ENCODE measurements at regions of chr7 and their contacts with region 1.

Region 1: GRCh38 chr7:100132697-100133151 is 6.0 kb downstream of the MBLAC1 start:
- DNase-seq: peak; percentile 60 to 71 (median 65)
- H3K4me3 ChIP-seq: no peak overlapping the region
- H3K4me3 Mint-ChIP-seq: peak overlapping the region in 2 of 8 donors; percentile 39 to 52
- H3K27ac ChIP-seq: no peak overlapping the region
- H3K27ac Mint-ChIP-seq: peak overlapping the region in 5 of 7 donors; percentile 36 to 77 (median 48)
- H3K4me1 ChIP-seq: peaks cover 24% of the 10 kb centered on the region
- H3K4me1 Mint-ChIP-seq: peaks cover 5 to 20% (median 13%) of the 10 kb centered on the region in 4 donors
- H3K27me3 ChIP-seq: no peaks in the 10 kb centered on the region
- H3K27me3 Mint-ChIP-seq: peaks cover 0 to 1% of the 10 kb centered on the region in 2 donors

Region 2: GRCh38 chr7:99975782-99976521 is 156.8 kb before region 1 on chr7 and contains the start of gene AZGP1:
- CTCF ChIA-PET with region 1: interaction called, 51 read pairs
- POLR2A ChIA-PET with region 1: no interaction called
- intact Hi-C with region 1: no loop called
- DNase-seq: no peak
- H3K4me3 ChIP-seq: no peak within 1 kb of the TSS
- H3K4me3 Mint-ChIP-seq: no peak within 1 kb of the TSS
- H3K27ac ChIP-seq: no peak within 1 kb of the TSS
- H3K27ac Mint-ChIP-seq: no peak within 1 kb of the TSS
- H3K4me1 ChIP-seq: no peaks in the 10 kb centered on the region
- H3K4me1 Mint-ChIP-seq: peaks cover 0 to 2% (median 0%) of the 10 kb centered on the region in 4 donors
- H3K27me3 ChIP-seq: no peaks in the 10 kb centered on the region
- H3K27me3 Mint-ChIP-seq: peaks cover 9 to 16% of the 10 kb centered on the region in 2 donors
- total RNA-seq, gene AZGP1: not detected

Region 3: DNA sequence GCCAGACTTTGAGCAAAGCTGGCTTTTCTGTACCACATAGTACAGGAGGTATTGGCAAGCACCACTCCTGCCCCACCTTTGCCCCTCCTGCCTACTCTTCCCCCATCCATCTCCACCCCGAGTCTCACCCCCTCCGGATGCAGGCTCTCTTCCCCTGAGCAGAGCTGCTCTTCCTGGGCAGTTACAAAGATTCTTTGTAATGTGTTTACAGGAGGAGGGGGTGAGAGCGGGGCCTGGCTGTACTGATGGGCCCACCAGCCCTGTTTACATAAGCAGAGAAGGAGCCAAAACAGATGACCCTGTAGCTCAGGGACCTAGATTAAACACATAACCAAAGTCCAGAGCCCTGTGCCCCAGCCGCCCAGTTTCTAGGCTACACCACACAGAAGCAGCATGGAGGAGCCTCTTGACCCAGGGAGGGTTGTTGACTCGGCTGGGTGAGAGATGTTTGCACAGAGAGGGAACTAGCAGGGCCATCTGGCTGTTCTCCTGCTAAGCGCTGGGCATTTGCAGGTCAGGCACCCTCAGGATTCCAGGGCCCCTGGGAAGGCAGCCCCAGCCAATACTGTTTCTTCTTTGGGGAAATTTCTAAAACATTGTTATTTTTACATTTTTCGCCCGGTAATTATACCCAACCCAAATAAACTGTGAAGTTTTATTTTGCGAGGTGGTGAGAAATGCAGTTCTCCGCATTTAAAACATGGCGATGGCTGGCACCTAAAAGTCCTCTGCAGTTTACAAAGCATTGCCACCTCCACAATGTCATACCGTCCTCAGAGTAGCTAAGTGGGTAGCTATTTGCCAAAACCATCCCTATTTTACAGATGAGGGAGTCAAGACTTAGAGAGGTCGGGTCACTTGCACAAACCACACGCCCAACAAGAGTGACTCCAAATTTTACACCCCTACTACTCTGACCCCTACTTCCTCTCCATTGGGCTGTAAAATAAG is 128.7 kb before region 1 on chr7:
- CTCF ChIA-PET with region 1: no interaction called
- POLR2A ChIA-PET with region 1: no interaction called
- intact Hi-C with region 1: no loop called
- DNase-seq: no peak
- H3K4me3 ChIP-seq: no peak overlapping the region
- H3K4me3 Mint-ChIP-seq: no peak overlapping the region
- H3K27ac ChIP-seq: no peak overlapping the region
- H3K27ac Mint-ChIP-seq: peak overlapping the region in 2 of 7 donors; percentile 29 to 31
- H3K4me1 ChIP-seq: no peaks in the 10 kb centered on the region
- H3K4me1 Mint-ChIP-seq: no peaks in the 10 kb centered on the region
- H3K27me3 ChIP-seq: no peaks in the 10 kb centered on the region
- H3K27me3 Mint-ChIP-seq: peaks cover 0 to 2% of the 10 kb centered on the region in 2 donors

Region 4: GRCh38 chr7:100119062-100119700 is 13.5 kb before region 1 on chr7 and contains the starts of genes CNPY4 and TAF6:
- CTCF ChIA-PET with region 1: interaction called, 21 read pairs
- POLR2A ChIA-PET with region 1: interaction called, 34 read pairs
- intact Hi-C with region 1: loop called (anchors 1 kb)
- DNase-seq: peak; percentile 96
- H3K4me3 ChIP-seq: peak within 1 kb of the TSS; percentile 89 to 95
- H3K4me3 Mint-ChIP-seq: peak within 1 kb of the TSS; percentile 94 to 99 (median 96)
- H3K27ac ChIP-seq: peak within 1 kb of the TSS; percentile 80
- H3K27ac Mint-ChIP-seq: peak within 1 kb of the TSS; percentile 95 to 100 (median 99)
- H3K4me1 ChIP-seq: peaks cover 26% of the 10 kb centered on the region
- H3K4me1 Mint-ChIP-seq: peaks cover 7 to 40% (median 26%) of the 10 kb centered on the region in 4 donors
- H3K27me3 ChIP-seq: no peaks in the 10 kb centered on the region
- H3K27me3 Mint-ChIP-seq: no peaks in the 10 kb centered on the region
- total RNA-seq, gene CNPY4: 69.0 to 69.8 TPM
- total RNA-seq, gene TAF6: 61.6 to 62.2 TPM

Region 5: DNA sequence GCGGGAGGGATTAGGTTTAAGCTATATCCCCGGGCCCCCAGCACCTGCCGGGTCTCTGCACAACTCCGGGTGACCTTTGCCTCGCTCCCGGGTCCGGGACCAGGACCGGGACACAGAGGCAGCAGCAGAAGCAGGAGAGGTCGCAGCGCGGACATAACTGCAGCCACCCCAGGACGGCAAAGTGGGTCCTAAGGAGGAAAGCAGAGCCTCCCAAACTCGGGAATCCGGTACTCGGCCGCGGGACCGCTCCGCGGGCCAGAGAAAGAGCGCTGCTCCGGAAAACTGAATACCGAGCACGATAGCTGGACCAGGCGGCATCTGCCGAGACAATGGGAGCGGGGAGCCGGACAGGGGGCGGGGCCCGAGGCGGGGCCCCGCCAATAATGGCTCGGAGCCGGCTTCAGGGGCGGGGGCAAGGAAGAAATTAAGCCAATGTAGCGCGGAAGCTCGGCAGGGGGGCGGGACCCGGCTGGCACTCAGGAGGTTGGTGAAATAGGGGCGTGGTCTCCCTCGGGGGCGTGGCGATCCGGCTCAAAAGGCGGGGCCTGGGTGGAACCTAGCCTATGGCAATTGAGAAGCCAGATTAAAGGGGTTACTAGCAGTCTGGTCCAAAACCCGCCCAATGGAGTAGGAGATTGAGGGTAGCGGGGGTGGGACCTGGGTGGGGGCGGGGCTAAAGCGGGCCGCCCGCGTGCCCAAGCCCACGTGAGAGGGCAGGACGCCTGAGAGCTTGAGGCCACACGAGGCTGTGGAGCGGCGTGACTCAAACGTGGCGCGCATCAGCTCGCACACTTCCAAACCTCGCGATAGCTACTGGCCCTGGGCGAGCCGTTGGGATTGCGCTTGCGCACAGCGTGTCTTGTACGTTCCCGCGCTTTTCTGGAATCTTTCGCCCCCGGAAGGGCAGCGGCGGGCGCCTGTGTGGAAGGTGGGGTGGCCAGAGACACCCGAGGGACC is 44.6 kb after region 1 on chr7 and contains the starts of genes GPC2 and STAG3:
- CTCF ChIA-PET with region 1: interaction called, 11 read pairs
- POLR2A ChIA-PET with region 1: interaction called, 4 read pairs
- intact Hi-C with region 1: no loop called
- DNase-seq: peak; percentile 96 to 97 (median 97)
- H3K4me3 ChIP-seq: peak within 1 kb of the TSS; percentile 36 to 41
- H3K4me3 Mint-ChIP-seq: peak within 1 kb of the TSS; percentile 66 to 83 (median 80)
- H3K27ac ChIP-seq: peak within 1 kb of the TSS; percentile 35
- H3K27ac Mint-ChIP-seq: peak within 1 kb of the TSS; percentile 62 to 91 (median 76)
- H3K4me1 ChIP-seq: peaks cover 30% of the 10 kb centered on the region
- H3K4me1 Mint-ChIP-seq: peaks cover 22 to 50% (median 34%) of the 10 kb centered on the region in 4 donors
- H3K27me3 ChIP-seq: no peaks in the 10 kb centered on the region
- H3K27me3 Mint-ChIP-seq: no peaks in the 10 kb centered on the region
- total RNA-seq, gene GPC2: 11.8 to 12.5 TPM
- total RNA-seq, gene STAG3: 6.5 to 7.7 TPM

Region 6: DNA sequence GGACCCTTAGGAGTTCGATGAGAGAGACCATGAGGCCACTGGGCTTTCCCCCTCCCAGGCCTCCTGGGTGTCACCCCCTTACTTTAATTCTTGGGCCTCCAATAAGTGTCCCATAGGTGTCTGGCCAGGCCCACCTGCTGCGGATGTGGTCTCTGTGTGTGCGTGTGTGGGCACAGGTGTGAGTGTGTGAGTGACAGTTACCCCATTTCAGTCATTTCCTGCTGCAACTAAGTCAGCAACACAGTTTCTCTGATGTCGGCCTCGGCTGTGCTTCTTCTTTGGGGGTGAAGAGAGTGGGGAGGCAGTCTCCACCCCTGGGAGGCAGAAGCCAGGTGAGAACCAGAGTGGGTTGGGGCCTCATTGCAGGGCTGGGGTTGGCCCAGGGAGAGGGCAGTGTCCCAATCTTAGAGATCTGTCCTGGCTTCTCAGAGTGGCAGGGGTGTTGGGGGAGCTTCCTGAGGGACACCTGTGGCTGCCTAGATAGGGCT is 88.6 kb after region 1 on chr7:
- CTCF ChIA-PET with region 1: interaction called, 108 read pairs
- POLR2A ChIA-PET with region 1: interaction called, 18 read pairs
- intact Hi-C with region 1: loop called (anchors 1 kb)
- DNase-seq: peak; percentile 87 to 94 (median 88)
- H3K4me3 ChIP-seq: peak overlapping the region; percentile 84 to 91
- H3K4me3 Mint-ChIP-seq: peak overlapping the region; percentile 92 to 98 (median 96)
- H3K27ac ChIP-seq: peak overlapping the region; percentile 90
- H3K27ac Mint-ChIP-seq: peak overlapping the region; percentile 96 to 99 (median 99)
- H3K4me1 ChIP-seq: peaks cover 69% of the 10 kb centered on the region
- H3K4me1 Mint-ChIP-seq: peaks cover 28 to 75% (median 57%) of the 10 kb centered on the region in 4 donors
- H3K27me3 ChIP-seq: no peaks in the 10 kb centered on the region
- H3K27me3 Mint-ChIP-seq: no peaks in the 10 kb centered on the region

Region 7: DNA sequence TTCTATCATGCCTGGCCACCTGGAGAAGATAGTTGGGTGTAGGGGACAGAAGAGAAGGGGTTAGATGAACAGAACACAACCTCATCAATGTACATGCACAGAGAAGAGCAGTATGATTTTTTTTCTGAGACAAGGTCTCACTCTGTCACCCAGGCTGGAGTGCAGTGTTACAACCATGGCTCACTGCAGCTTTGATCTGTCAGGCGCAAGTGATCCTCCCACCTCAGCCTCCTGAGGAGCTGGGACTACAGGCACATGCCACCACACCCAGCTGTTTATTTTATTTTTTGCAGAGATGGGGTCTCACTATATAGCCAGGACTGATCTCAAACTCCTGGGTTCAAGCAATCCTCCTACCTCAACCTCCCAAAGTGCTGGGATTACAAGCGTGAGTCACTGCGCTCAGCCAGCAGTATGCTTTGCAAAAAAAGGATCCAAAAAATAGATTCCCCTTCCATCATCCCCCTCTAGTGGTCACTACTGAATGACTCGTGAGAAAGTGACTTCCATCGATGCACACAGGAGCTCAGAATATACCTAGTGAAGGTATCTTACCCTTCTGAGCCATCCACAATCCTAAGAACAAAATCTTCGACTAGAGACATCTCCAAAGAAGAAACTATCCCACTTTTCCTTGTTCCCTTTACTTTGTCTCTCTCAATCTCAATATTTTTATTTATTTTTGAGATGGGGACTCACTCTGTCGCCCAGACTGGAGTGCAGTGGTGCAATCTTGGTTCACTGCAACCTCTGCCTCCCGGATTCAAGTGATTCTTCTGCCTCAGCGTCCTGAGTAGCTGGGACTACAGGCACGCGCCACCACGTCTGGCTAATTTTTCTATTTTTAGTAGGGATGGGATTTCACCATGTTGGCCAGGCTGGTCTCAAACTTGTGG is 274.8 kb after region 1 on chr7:
- CTCF ChIA-PET with region 1: interaction called, 7 read pairs
- POLR2A ChIA-PET with region 1: interaction called, 4 read pairs
- intact Hi-C with region 1: loop called (anchors 2 kb)
- DNase-seq: peak; percentile 57 to 63 (median 58)
- H3K4me3 ChIP-seq: no peak overlapping the region
- H3K4me3 Mint-ChIP-seq: no peak overlapping the region
- H3K27ac ChIP-seq: no peak overlapping the region
- H3K27ac Mint-ChIP-seq: no peak overlapping the region
- H3K4me1 ChIP-seq: peaks cover 4% of the 10 kb centered on the region
- H3K4me1 Mint-ChIP-seq: peaks cover 0 to 5% (median 2%) of the 10 kb centered on the region in 4 donors
- H3K27me3 ChIP-seq: no peaks in the 10 kb centered on the region
- H3K27me3 Mint-ChIP-seq: no peaks in the 10 kb centered on the region